ENCODE measurements at regions of chr5 and their contacts with region 1.

Region 1: DNA sequence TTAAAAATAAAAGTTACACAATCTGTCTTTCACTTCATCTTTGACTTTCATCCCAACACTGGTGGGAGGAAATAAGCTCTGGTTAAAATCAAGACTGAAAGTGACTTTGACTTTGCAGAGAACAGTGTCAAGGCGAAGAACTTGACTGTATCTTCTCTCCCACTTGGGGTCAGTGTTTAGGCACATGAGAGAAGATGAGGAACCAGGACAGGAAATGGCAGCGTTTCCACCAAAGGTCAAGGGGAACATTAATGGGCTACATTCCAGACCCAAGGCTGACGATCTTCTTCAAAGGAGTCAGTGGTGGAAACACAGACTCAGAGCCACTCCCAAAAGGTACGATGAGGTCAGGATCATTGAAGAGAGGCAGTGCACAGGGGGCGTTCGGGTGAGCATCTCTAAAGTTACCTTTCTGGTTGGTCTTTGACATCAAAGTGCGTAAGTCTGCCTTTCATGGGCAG is 409.6 kb downstream of the ARHGEF28 start:
- DNase-seq: peak in 1 of 2 donors; percentile 63
- ATAC-seq: peak; percentile 47 to 90 (median 80)
- H3K4me3 ChIP-seq: no peak overlapping the region
- H3K27ac ChIP-seq: no peak overlapping the region
- H3K4me1 ChIP-seq: peaks cover 0 to 11% (median 5%) of the 10 kb centered on the region in 9 donors
- H3K27me3 ChIP-seq: no peaks in the 10 kb centered on the region
- CTCF ChIP-seq: peak; percentile 16 to 72 (median 52)

Region 2: GRCh38 chr5:73917433-73917832 is 118.1 kb before region 1 on chr5:
- intact Hi-C with region 1: loop called in 2 of 10 experiments (anchors 10 kb)
- DNase-seq: peak in 1 of 2 donors; percentile 18
- ATAC-seq: peak in 6 of 8 donors; percentile 28 to 86 (median 59)
- H3K4me3 ChIP-seq: no peak overlapping the region
- H3K27ac ChIP-seq: no peak overlapping the region
- H3K4me1 ChIP-seq: peaks cover 0 to 20% (median 13%) of the 10 kb centered on the region in 9 donors
- H3K27me3 ChIP-seq: no peaks in the 10 kb centered on the region
- CTCF ChIP-seq: no peak

Region 3: GRCh38 chr5:74056789-74057164 is 21.2 kb after region 1 on chr5:
- intact Hi-C with region 1: no loop called
- DNase-seq: no peak
- ATAC-seq: peak in 3 of 8 donors; percentile 33 to 63 (median 43)
- H3K4me3 ChIP-seq: no peak overlapping the region
- H3K27ac ChIP-seq: peak overlapping the region in 3 of 10 donors; percentile 37 to 50 (median 39)
- H3K4me1 ChIP-seq: peaks cover 0 to 28% (median 8%) of the 10 kb centered on the region in 9 donors
- H3K27me3 ChIP-seq: peaks cover 0 to 4% (median 0%) of the 10 kb centered on the region in 7 donors
- CTCF ChIP-seq: peak; percentile 14 to 63 (median 38)

Region 4: DNA sequence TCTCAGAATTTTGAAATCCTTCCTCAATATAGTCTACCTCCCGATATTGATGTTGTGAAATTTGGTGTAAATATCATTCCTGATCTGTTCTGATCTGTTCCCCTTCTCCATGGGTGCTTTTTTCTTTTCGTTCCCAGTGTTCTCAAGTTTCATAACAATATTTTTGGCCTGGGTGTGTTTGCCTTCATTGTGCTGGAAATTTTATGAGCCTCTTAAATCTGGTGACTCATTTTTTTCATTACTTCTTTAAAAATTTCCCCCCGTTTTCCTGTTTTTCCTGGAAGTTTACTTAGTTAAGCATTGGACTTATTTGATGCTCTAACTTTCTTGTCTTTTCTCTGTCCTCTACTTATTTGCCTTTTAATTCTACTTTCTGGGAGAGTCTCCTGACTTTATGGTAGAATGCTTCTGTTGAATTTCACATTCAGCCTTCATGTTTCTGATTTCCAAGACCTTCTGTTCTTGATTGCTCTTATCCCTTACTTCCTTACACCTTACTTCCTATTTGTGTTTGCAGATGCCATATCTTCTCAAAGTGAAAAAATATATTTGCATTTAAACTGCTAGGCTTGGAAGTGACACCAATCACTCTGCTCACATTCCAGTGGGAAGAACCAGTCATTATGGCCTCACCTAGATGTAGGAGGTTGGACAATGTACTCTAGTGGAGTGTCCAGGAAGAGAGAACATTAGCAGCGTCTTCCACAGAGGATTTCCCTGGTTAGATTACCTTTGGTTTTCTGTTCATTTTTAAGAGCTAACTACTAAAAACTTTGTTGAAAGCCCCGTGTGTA is 32.4 kb after region 1 on chr5:
- intact Hi-C with region 1: no loop called
- DNase-seq: no peak
- ATAC-seq: no peak
- H3K4me3 ChIP-seq: no peak overlapping the region
- H3K27ac ChIP-seq: no peak overlapping the region
- H3K4me1 ChIP-seq: peaks cover 0 to 4% (median 0%) of the 10 kb centered on the region in 9 donors
- H3K27me3 ChIP-seq: no peaks in the 10 kb centered on the region
- CTCF ChIP-seq: no peak

Region 5: DNA sequence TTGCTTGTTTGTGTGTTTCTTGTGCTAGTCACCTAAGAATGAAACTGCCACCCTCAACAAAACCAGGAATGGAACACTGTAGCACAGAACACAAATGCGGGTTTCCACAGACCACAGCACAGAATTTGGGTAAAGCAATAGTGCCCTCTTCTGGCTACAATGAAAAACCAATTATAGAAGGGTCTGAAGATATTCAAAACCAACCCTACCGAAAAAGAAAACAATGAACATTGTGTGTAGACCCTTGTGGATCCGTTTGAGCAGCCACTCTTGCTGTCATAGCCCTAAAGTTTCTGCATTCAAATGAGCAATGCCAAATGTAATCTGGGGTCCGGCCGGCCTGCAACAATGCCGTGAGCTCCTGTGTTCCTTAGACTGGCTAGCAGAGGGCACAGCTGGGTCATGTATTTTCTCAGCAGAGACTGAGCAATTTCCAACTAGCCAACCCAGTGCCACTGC is 613.3 kb after region 1 on chr5:
- intact Hi-C with region 1: loop called in 8 of 10 experiments (anchors 5 to 10 kb)
- DNase-seq: no peak
- ATAC-seq: peak; percentile 75 to 93 (median 90)
- H3K4me3 ChIP-seq: peak overlapping the region in 1 of 10 donors; percentile 25
- H3K27ac ChIP-seq: no peak overlapping the region
- H3K4me1 ChIP-seq: peaks cover 0 to 17% (median 7%) of the 10 kb centered on the region in 9 donors
- H3K27me3 ChIP-seq: no peaks in the 10 kb centered on the region
- CTCF ChIP-seq: peak; percentile 54 to 88 (median 77)

Measured in heart right ventricle (tissue), 16 donors.